ENCODE measurements at regions of chr7 and their contacts with region 1.

Region 1: DNA sequence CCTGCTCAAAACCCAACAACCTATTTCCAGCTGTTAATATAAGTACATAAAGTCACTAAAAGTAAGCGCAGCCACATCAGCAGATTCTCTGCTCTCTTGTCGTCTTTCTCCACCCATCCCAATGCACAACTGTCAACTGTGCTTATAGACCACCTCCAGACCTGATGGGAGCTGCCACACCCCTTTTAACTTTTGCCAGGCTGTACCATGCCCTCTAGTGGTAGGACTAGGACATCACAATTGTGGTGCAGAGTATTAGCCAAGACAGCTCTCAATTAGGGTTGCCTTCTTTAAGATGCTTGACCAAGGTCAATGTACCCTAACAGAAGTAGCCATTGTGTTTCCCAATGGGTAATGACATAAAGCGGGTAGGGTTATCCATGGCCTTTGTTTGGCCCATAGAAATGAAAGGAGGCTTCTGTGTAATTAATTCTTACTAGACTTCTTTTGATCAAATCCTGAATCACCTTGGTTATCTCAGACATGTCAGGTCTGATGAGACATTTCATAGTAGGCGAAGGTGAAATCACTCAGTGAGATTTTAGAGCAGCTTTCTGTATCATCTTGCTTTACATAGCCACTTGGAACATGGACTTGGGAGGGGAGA is 68.1 kb downstream of the SCRN1 start:
- DNase-seq: peak; percentile 61
- ATAC-seq: peak; percentile 95
- H3K4me3 Mint-ChIP-seq: no peak overlapping the region
- H3K27ac Mint-ChIP-seq: no peak overlapping the region
- H3K4me1 Mint-ChIP-seq: peaks cover 6% of the 10 kb centered on the region
- H3K27me3 Mint-ChIP-seq: no peaks in the 10 kb centered on the region
- CTCF ChIP-seq: peak; percentile 88

Region 2: DNA sequence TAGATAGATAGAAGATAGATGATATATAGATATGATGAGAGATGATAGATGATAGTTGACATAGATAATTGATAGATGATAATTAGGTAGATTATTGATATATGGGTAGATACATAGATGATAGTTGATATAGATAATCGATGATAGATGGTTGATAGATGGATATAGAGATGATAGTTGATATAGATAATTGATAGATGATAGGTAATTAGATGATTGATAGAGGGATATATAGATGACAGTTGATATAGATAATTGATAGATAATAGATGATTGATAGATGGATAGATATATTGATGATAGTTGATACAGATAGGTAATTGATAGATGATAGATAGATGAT is 285.5 kb before region 1 on chr7:
- CTCF ChIA-PET with region 1: interaction called, 18 read pairs
- POLR2A ChIA-PET with region 1: no interaction called
- intact Hi-C with region 1: no loop called
- DNase-seq: no peak
- ATAC-seq: no peak
- H3K4me3 Mint-ChIP-seq: no peak overlapping the region
- H3K27ac Mint-ChIP-seq: no peak overlapping the region
- H3K4me1 Mint-ChIP-seq: no peaks in the 10 kb centered on the region
- H3K27me3 Mint-ChIP-seq: no peaks in the 10 kb centered on the region
- CTCF ChIP-seq: no peak

Region 3: DNA sequence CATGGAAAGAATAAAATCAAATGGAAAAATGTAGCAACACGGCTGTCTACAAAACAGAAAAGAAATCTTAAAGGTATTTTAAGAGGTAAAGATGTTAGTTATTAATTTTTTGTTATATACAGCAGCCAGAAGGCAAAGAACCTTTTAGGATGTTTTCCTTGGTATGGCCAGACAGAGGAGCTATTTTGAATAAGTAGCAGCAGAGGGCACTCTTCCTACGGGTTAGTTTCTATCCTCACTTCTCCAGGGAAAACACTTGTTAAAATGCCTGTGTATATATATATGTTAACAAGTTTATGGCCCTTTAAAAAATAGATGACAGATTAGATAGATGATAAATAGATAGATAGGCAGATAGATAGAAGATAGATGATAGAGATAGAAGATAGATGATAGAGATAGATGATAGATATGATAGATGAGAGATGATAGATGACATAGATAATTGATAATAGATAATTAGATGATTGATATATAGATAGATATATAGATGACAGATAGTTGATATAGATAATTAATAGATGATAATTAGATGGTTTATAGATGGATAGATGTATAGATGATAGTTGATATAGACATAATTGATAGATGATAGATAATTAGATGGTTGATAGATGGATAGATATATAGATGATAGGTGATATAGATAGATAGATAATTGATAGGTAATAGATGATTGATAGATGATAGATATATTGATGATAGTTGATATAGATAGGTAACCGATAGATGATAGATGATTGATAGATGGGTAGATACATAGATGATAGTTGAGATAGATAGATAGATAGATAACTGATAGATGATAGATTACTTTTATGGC is 173.0 kb before region 1 on chr7:
- CTCF ChIA-PET with region 1: interaction called, 16 read pairs
- POLR2A ChIA-PET with region 1: no interaction called
- intact Hi-C with region 1: loop called (anchors 5 kb)
- DNase-seq: no peak
- ATAC-seq: no peak
- H3K4me3 Mint-ChIP-seq: no peak overlapping the region
- H3K27ac Mint-ChIP-seq: no peak overlapping the region
- H3K4me1 Mint-ChIP-seq: no peaks in the 10 kb centered on the region
- H3K27me3 Mint-ChIP-seq: peaks cover 5% of the 10 kb centered on the region
- CTCF ChIP-seq: peak; percentile 53

Region 4: GRCh38 chr7:29878081-29878688 is 43.3 kb before region 1 on chr7:
- CTCF ChIA-PET with region 1: interaction called, 30 read pairs
- POLR2A ChIA-PET with region 1: no interaction called
- intact Hi-C with region 1: loop called (anchors 5 kb)
- DNase-seq: peak; percentile 60
- ATAC-seq: no peak
- H3K4me3 Mint-ChIP-seq: no peak overlapping the region
- H3K27ac Mint-ChIP-seq: no peak overlapping the region
- H3K4me1 Mint-ChIP-seq: peaks cover 6% of the 10 kb centered on the region
- H3K27me3 Mint-ChIP-seq: peaks cover 5% of the 10 kb centered on the region
- CTCF ChIP-seq: peak; percentile 66

Region 5: GRCh38 chr7:29906200-29907022 is 15.1 kb before region 1 on chr7:
- CTCF ChIA-PET with region 1: interaction called, 15 read pairs
- POLR2A ChIA-PET with region 1: no interaction called
- intact Hi-C with region 1: no loop called
- DNase-seq: no peak
- ATAC-seq: no peak
- H3K4me3 Mint-ChIP-seq: no peak overlapping the region
- H3K27ac Mint-ChIP-seq: no peak overlapping the region
- H3K4me1 Mint-ChIP-seq: no peaks in the 10 kb centered on the region
- H3K27me3 Mint-ChIP-seq: no peaks in the 10 kb centered on the region
- CTCF ChIP-seq: no peak

Region 6: GRCh38 chr7:29955799-29956486 is 34.4 kb after region 1 on chr7:
- CTCF ChIA-PET with region 1: interaction called, 18 read pairs
- POLR2A ChIA-PET with region 1: no interaction called
- intact Hi-C with region 1: no loop called
- DNase-seq: peak; percentile 65
- ATAC-seq: peak; percentile 94
- H3K4me3 Mint-ChIP-seq: no peak overlapping the region
- H3K27ac Mint-ChIP-seq: peak overlapping the region; percentile 47
- H3K4me1 Mint-ChIP-seq: peaks cover 16% of the 10 kb centered on the region
- H3K27me3 Mint-ChIP-seq: no peaks in the 10 kb centered on the region
- CTCF ChIP-seq: no peak

Region 7: DNA sequence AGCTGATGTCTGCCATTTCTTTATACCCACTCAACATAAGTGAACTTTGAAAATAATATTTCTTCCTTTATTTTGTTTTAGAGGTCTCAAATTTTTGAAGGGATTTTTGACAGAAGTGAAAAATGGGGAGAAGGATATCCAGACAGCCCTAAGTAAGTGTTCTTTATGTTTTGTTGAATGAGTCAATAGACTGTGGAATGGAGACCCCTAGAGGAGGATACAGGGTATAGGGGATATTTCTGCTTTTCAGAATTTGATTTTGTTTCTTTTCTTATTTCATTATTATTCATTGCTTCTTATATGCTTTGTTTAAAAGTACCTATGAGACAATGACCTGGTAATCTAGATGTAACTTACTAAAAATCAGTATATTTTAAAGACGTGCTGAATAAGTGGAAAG is 141.1 kb after region 1 on chr7:
- CTCF ChIA-PET with region 1: interaction called, 23 read pairs
- POLR2A ChIA-PET with region 1: no interaction called
- intact Hi-C with region 1: no loop called
- DNase-seq: no peak
- ATAC-seq: peak; percentile 74
- H3K4me3 Mint-ChIP-seq: no peak overlapping the region
- H3K27ac Mint-ChIP-seq: no peak overlapping the region
- H3K4me1 Mint-ChIP-seq: peaks cover 3% of the 10 kb centered on the region
- H3K27me3 Mint-ChIP-seq: no peaks in the 10 kb centered on the region
- CTCF ChIP-seq: peak; percentile 45